PC-9 (cell line): ENCODE measurements at regions of chr7 and their contacts with region 1.

Region 1: GRCh38 chr7:12570534-12571461 is at the start of gene SCIN:
- DNase-seq: peak in 1 of 2 experiments; percentile 55
- H3K4me3 ChIP-seq: peak within 1 kb of the TSS; percentile 60
- H3K27ac ChIP-seq: no peak within 1 kb of the TSS
- H3K4me1 ChIP-seq: peaks cover 22% of the 10 kb centered on the region
- H3K27me3 ChIP-seq: no peaks in the 10 kb centered on the region
- CTCF ChIP-seq: no peak
- total RNA-seq, gene SCIN: 0.33 and 0.92 TPM in 2 replicates

Region 2: DNA sequence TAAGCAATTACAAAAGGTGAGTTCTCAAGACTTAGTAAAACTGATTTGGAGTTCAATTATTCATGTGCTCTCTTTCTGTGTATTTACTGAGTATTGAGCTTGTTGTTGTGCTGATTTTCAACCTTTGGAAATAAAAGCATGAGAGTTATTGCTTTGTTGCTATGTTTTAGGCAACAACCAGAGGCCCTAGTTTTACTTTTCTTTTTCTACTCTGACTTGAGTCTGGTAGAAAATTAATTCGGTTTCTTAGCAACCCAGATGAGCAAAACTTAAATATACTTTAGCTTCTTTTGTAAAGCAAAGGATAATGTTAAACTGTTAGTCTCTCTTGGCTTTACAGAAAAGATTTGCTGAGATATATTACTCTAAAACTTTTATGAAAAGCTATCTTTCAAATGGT is 66.6 kb before region 1 on chr7:
- CTCF ChIA-PET with region 1: no interaction called
- POLR2A ChIA-PET with region 1: no interaction called
- intact Hi-C with region 1: no loop called
- DNase-seq: no peak
- H3K4me3 ChIP-seq: no peak overlapping the region
- H3K27ac ChIP-seq: no peak overlapping the region
- H3K4me1 ChIP-seq: no peaks in the 10 kb centered on the region
- H3K27me3 ChIP-seq: no peaks in the 10 kb centered on the region
- CTCF ChIP-seq: no peak

Region 3: DNA sequence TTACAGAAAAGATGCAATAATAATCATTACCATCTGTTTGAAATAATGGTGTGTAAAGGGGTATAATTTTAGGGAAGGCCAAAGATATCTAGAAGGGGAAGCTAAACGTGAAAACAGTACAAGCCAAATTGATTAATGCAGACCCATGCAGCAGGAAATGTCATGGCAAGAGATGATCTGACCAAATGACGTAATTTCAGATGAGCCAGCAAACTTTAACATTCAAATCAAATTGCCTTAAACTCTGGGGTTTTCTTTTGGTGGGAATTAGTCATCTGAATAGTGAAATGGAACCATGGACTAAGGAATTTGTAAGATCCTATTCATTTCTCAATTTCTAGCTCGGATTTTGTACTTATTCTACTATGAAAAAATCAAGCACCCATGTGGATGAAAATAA is 21.7 kb before region 1 on chr7:
- CTCF ChIA-PET with region 1: interaction called, 3 read pairs
- POLR2A ChIA-PET with region 1: no interaction called
- intact Hi-C with region 1: loop called (anchors 2 kb)
- DNase-seq: no peak
- H3K4me3 ChIP-seq: no peak overlapping the region
- H3K27ac ChIP-seq: no peak overlapping the region
- H3K4me1 ChIP-seq: peaks cover 13% of the 10 kb centered on the region
- H3K27me3 ChIP-seq: no peaks in the 10 kb centered on the region
- CTCF ChIP-seq: no peak

Region 4: DNA sequence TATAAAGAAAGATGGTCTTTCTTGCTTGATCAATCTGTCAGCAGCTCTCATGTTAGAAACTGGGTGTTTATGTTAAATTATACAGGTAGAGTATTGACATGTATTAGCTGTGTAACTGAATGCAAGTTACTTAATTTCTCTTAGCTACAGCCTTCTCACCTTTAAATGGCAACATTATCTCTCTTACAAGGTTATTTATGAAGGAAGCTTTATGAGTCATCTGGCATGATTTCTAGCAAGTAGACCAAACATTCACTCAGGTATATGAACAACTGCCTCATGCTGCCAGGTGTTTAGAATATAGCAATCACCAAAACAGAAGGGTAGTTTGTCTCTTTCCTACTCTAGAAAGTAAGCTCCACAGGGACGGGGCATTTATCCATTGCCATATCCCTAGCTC is 125.2 kb after region 1 on chr7:
- CTCF ChIA-PET with region 1: no interaction called
- POLR2A ChIA-PET with region 1: no interaction called
- intact Hi-C with region 1: no loop called
- DNase-seq: no peak
- H3K4me3 ChIP-seq: no peak overlapping the region
- H3K27ac ChIP-seq: no peak overlapping the region
- H3K4me1 ChIP-seq: peaks cover 12% of the 10 kb centered on the region
- H3K27me3 ChIP-seq: no peaks in the 10 kb centered on the region
- CTCF ChIP-seq: no peak